HCT116 (cell line): ENCODE measurements at regions of chr19 and their contacts with region 1.

Region 1: DNA sequence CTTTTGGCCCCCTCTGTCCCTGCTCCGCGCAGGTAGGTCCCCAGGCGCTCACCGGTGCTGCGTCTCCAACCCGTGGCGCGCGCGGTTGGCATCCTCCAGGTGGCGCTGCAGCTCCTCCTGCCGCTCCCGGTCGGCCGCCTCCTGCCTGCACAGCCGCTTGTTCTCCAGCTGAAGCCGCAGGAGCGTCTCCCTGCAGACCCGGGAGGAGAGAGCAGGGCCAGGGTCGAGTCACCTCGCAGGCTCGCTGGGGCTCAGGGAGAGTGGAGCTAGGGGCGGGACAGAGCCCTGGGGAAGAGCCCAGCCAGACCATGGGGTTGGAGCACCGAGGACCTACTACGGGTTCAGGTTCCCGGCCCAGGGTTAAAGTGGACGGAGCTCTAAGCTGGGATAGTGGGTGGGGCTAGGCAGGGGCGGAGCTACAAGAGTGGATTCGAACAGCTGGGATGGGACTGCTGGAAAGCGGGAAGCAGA is 9.3 kb downstream of the HOOK2 start:
- DNase-seq: no peak
- ATAC-seq: peak; percentile 94
- H3K4me3 ChIP-seq: peak overlapping the region; percentile 43 to 58
- H3K27ac ChIP-seq: peak overlapping the region; percentile 81
- H3K4me1 ChIP-seq: peaks cover 2 to 11% of the 10 kb centered on the region in 2 experiments; a peak in 2 of 4 replicates
- H3K27me3 ChIP-seq: no peaks in the 10 kb centered on the region
- CTCF ChIP-seq: peak; percentile 80 to 95 (median 88)
- POLR2A ChIP-seq: no peak
- RAD21 ChIP-seq: peak; percentile 88

Region 2: GRCh38 chr19:12425236-12425887 is 340.7 kb before region 1 on chr19:
- CTCF ChIA-PET with region 1: no interaction called
- POLR2A ChIA-PET with region 1: no interaction called
- RAD21 ChIA-PET with region 1: no interaction called
- intact Hi-C with region 1: no loop called
- DNase-seq: no peak
- ATAC-seq: no peak
- H3K4me3 ChIP-seq: no peak overlapping the region
- H3K27ac ChIP-seq: no peak overlapping the region
- H3K4me1 ChIP-seq: no peaks in the 10 kb centered on the region
- H3K27me3 ChIP-seq: no peaks in the 10 kb centered on the region
- CTCF ChIP-seq: no peak
- POLR2A ChIP-seq: no peak
- RAD21 ChIP-seq: no peak

Region 3: DNA sequence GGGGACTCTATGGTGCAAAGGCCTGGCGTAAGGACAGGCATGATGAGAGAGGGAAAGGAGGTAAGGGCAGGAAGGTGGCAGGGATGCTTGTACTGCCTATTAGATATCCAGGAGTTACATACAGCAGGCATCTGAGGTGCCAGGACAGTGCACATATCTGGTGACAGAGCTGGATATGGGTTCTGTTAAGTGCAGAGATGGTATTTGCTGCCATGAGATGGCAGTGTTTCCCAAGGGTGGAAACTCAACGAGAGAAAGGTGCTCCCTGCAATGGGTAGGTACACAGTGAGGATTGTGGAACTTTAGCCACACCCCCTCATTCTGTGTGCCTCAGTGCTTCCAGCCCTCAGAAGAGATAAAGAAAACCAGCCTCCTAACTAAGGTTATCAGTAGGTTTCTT is 49.2 kb before region 1 on chr19:
- CTCF ChIA-PET with region 1: interaction called, 11 read pairs
- POLR2A ChIA-PET with region 1: no interaction called
- RAD21 ChIA-PET with region 1: no interaction called
- intact Hi-C with region 1: no loop called
- DNase-seq: peak; percentile 62
- ATAC-seq: peak; percentile 87
- H3K4me3 ChIP-seq: no peak overlapping the region
- H3K27ac ChIP-seq: no peak overlapping the region
- H3K4me1 ChIP-seq: peaks cover 0 to 20% of the 10 kb centered on the region in 2 experiments; a peak in 2 of 4 replicates
- H3K27me3 ChIP-seq: no peaks in the 10 kb centered on the region
- CTCF ChIP-seq: peak; percentile 60 to 67 (median 67)
- POLR2A ChIP-seq: no peak
- RAD21 ChIP-seq: peak; percentile 79

Region 4: GRCh38 chr19:12777217-12778016 is 11.3 kb after region 1 on chr19:
- CTCF ChIA-PET with region 1: interaction called, 53 read pairs
- POLR2A ChIA-PET with region 1: interaction called, 6 read pairs
- RAD21 ChIA-PET with region 1: interaction called, 3 read pairs
- intact Hi-C with region 1: no loop called
- DNase-seq: no peak
- ATAC-seq: peak; percentile 41
- H3K4me3 ChIP-seq: peak overlapping the region; percentile 66 to 68
- H3K27ac ChIP-seq: peak overlapping the region; percentile 96
- H3K4me1 ChIP-seq: peaks cover 49 to 77% of the 10 kb centered on the region in 2 experiments
- H3K27me3 ChIP-seq: no peaks in the 10 kb centered on the region
- CTCF ChIP-seq: peak; percentile 87 to 95 (median 94); a peak in 5 of 6 replicates
- POLR2A ChIP-seq: no peak
- RAD21 ChIP-seq: peak; percentile 93

Region 5: GRCh38 chr19:12789904-12790619 is 24.0 kb after region 1 on chr19:
- CTCF ChIA-PET with region 1: interaction called, 123 read pairs
- POLR2A ChIA-PET with region 1: interaction called, 98 read pairs
- RAD21 ChIA-PET with region 1: interaction called in 1 of 2 experiments, 11 read pairs
- intact Hi-C with region 1: no loop called
- DNase-seq: peak; percentile 89
- ATAC-seq: peak; percentile 52
- H3K4me3 ChIP-seq: peak overlapping the region; percentile 77 to 84
- H3K27ac ChIP-seq: peak overlapping the region; percentile 96
- H3K4me1 ChIP-seq: peaks cover 64 to 92% of the 10 kb centered on the region in 2 experiments
- H3K27me3 ChIP-seq: no peaks in the 10 kb centered on the region
- CTCF ChIP-seq: no peak
- POLR2A ChIP-seq: no peak
- RAD21 ChIP-seq: no peak

Region 6: DNA sequence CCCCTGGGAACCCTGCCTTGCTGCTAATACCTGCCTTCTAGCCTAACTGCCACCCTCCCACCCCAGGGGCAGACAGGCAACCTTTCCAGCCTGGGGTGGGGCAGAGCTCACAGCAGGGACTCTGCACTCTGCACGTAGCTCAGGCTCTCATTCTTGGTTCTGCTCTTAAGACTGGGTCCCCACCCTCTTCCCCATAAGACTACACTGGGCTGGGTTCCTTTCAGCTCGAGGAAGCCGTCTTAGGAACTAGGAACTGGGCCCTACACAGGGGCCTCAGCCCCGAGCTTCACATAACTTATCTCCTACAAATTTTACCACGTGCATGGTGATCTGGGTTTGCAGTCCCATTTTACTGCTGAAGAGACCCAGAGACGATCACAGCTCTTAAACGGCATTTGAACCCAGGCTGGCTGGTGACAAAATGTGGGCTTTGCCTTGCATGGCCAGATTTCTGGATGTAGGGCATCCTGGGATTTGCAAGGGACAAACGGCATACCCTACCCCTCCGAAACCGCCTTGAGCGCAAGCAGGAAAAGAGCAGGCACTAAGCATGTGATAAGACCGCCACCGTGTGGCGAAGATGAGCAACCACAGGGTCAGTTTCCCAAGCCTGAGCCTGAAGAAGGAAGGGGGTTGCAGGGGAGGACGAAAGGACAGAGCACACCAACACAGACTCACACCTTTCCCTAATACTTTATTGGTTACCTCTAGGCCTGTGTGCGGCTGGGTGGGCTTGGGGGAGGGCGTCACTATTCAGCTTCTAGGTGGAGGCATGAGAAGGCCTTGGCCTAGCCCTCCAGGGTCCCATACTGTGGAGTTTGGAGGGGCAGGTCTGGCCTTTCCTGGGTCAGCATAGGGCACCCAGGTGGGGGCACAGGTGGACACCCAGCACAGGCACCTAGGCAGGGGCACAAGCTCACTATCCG is 30.3 kb after region 1 on chr19:
- CTCF ChIA-PET with region 1: interaction called, 123 read pairs
- POLR2A ChIA-PET with region 1: interaction called, 98 read pairs
- RAD21 ChIA-PET with region 1: interaction called, 11 to 17 read pairs
- intact Hi-C with region 1: loop called (anchors 1 kb)
- DNase-seq: no peak
- ATAC-seq: peak; percentile 32
- H3K4me3 ChIP-seq: peak overlapping the region in 1 of 2 experiments; percentile 33; a peak in 1 of 4 replicates
- H3K27ac ChIP-seq: peak overlapping the region; percentile 70
- H3K4me1 ChIP-seq: peaks cover 29 to 68% of the 10 kb centered on the region in 2 experiments
- H3K27me3 ChIP-seq: no peaks in the 10 kb centered on the region
- CTCF ChIP-seq: peak in 2 of 3 experiments; percentile 93 to 94; a peak in 4 of 6 replicates
- POLR2A ChIP-seq: peak; percentile 0
- RAD21 ChIP-seq: no peak

Region 7: GRCh38 chr19:12847159-12848139 is 81.4 kb after region 1 on chr19:
- CTCF ChIA-PET with region 1: interaction called, 34 read pairs
- POLR2A ChIA-PET with region 1: no interaction called
- RAD21 ChIA-PET with region 1: interaction called in 1 of 2 experiments, 5 read pairs
- intact Hi-C with region 1: no loop called
- DNase-seq: no peak
- ATAC-seq: peak; percentile 99
- H3K4me3 ChIP-seq: no peak overlapping the region
- H3K27ac ChIP-seq: peak overlapping the region; percentile 22; the same call in 1 of the 2 replicates
- H3K4me1 ChIP-seq: peaks cover 4 to 18% of the 10 kb centered on the region in 2 experiments; a peak in 3 of 4 replicates
- H3K27me3 ChIP-seq: no peaks in the 10 kb centered on the region
- CTCF ChIP-seq: peak; percentile 81 to 98 (median 95)
- POLR2A ChIP-seq: no peak
- RAD21 ChIP-seq: peak; percentile 96

Region 8: DNA sequence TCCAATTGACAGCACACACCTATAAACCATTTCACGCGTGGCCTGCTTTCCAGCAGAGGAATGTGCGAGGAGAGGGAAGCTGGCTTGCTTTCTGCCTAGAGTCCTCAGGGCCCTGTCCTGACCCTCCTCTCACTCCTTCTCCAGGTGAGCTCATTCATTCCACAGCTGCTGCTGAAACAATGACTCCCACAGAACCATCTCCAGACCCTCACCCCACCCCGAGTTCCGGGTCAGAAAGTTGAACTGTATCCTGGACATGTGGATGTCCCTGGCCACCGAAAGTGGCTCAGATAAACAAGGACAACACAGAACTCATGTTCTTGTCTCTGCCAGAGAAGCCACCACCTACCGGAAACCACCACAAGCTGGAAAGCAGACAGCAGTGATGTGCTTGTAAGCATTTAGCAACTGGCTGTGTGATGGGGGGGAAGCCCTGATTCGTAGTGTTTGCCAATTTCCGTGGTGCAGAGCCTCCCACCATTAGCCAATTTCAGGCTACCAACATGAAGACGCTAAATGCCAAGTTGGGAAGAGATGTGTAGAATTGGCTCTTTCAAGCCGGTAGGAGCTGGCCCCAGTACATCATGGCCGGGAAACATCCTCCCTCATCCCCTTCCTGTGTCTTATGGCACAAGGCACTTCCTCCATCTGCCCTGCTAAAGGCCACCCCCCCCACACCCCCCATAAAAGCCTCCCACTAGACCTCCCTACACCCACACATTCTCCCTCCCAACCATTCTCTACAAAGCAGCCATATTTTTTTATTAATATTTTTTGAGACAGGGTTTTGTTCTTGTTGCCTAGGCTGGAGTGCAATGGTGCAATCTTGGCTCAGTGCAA is 148.0 kb after region 1 on chr19:
- CTCF ChIA-PET with region 1: no interaction called
- POLR2A ChIA-PET with region 1: no interaction called
- RAD21 ChIA-PET with region 1: no interaction called
- intact Hi-C with region 1: no loop called
- DNase-seq: no peak
- ATAC-seq: no peak
- H3K4me3 ChIP-seq: no peak overlapping the region
- H3K27ac ChIP-seq: no peak overlapping the region
- H3K4me1 ChIP-seq: peaks cover 0 to 3% of the 10 kb centered on the region in 2 experiments; a peak in 2 of 4 replicates
- H3K27me3 ChIP-seq: no peaks in the 10 kb centered on the region
- CTCF ChIP-seq: no peak
- POLR2A ChIP-seq: no peak
- RAD21 ChIP-seq: no peak

Region 9: GRCh38 chr19:12965017-12965811 is 199.1 kb after region 1 on chr19:
- CTCF ChIA-PET with region 1: interaction called, 13 read pairs
- POLR2A ChIA-PET with region 1: no interaction called
- RAD21 ChIA-PET with region 1: no interaction called
- intact Hi-C with region 1: no loop called
- DNase-seq: peak; percentile 73
- ATAC-seq: peak; percentile 93
- H3K4me3 ChIP-seq: peak overlapping the region; percentile 35 to 52
- H3K27ac ChIP-seq: peak overlapping the region; percentile 54
- H3K4me1 ChIP-seq: peaks cover 3 to 18% of the 10 kb centered on the region in 2 experiments; a peak in 3 of 4 replicates
- H3K27me3 ChIP-seq: no peaks in the 10 kb centered on the region
- CTCF ChIP-seq: peak; percentile 72 to 98 (median 91)
- POLR2A ChIP-seq: peak; percentile 11
- RAD21 ChIP-seq: peak; percentile 77